ENCODE measurements at regions of chr9 and their contacts with region 1.

Region 1: GRCh38 chr9:20356403-20357035 is 265.8 kb downstream of the MLLT3 start:
- DNase-seq: peak; percentile 56
- H3K4me3 Mint-ChIP-seq: peak overlapping the region; percentile 49
- H3K27ac Mint-ChIP-seq: peak overlapping the region; percentile 81
- H3K4me1 Mint-ChIP-seq: peaks cover 23% of the 10 kb centered on the region
- H3K27me3 Mint-ChIP-seq: no peaks in the 10 kb centered on the region
- CTCF ChIP-seq: peak; percentile 24

Region 2: DNA sequence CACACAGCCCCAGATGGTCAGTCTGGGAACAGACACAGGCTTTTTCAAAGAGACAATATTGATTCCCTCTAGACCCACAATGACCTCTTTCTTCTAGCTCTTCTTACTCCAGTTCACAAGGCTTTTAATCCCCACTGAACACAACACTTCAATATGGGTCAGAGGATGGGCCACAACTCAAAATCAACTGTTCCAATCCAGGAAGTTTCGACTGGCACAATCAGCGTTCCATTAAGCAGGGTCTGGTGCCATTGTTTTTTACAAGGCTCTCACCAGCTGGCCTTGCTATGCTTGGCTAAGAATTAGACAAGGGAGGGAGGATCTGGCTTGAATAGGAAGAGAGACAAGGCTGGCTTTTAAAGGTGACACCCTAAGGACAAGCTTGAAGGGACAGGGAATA is 368.2 kb before region 1 on chr9:
- CTCF ChIA-PET with region 1: no interaction called
- intact Hi-C with region 1: no loop called
- DNase-seq: no peak
- H3K4me3 Mint-ChIP-seq: no peak overlapping the region
- H3K27ac Mint-ChIP-seq: no peak overlapping the region
- H3K4me1 Mint-ChIP-seq: no peaks in the 10 kb centered on the region
- H3K27me3 Mint-ChIP-seq: peaks cover 13% of the 10 kb centered on the region
- CTCF ChIP-seq: no peak

Region 3: DNA sequence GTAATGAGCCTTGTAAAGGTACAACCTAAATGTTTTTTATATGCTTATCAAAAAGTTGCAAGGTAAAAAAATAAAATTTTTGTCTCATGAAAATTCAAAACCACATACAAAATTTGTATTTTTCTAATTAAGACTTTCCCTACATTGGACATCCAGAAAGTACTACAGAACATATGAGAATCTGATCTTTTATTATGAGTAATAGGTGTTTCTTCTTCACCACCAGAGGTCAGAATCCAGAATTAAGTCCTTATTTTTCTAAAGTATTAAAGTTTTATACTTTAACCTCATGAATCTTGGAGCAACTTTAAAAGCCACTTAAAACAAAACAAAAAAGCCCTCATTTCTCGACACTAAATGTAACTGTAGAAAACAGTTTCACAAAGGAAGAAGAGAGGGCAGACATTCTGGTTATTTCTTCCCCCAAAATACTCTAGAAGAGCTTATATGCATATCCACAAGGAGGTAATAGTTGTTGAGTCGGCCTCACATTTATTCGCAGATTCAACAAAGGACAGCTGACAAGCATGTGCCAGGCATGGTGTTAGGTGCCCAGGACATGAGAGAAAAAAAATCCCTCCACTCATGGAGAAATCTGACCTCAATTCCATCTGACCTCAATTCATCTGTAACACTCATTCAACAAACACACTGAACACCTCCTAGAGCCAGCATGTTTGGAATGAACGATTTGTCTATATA is 196.5 kb after region 1 on chr9:
- CTCF ChIA-PET with region 1: interaction called, 4 read pairs
- intact Hi-C with region 1: loop called (anchors 5 kb)
- DNase-seq: no peak
- H3K4me3 Mint-ChIP-seq: peak overlapping the region; percentile 30
- H3K27ac Mint-ChIP-seq: peak overlapping the region; percentile 35
- H3K4me1 Mint-ChIP-seq: peaks cover 50% of the 10 kb centered on the region
- H3K27me3 Mint-ChIP-seq: no peaks in the 10 kb centered on the region
- CTCF ChIP-seq: no peak

Region 4: DNA sequence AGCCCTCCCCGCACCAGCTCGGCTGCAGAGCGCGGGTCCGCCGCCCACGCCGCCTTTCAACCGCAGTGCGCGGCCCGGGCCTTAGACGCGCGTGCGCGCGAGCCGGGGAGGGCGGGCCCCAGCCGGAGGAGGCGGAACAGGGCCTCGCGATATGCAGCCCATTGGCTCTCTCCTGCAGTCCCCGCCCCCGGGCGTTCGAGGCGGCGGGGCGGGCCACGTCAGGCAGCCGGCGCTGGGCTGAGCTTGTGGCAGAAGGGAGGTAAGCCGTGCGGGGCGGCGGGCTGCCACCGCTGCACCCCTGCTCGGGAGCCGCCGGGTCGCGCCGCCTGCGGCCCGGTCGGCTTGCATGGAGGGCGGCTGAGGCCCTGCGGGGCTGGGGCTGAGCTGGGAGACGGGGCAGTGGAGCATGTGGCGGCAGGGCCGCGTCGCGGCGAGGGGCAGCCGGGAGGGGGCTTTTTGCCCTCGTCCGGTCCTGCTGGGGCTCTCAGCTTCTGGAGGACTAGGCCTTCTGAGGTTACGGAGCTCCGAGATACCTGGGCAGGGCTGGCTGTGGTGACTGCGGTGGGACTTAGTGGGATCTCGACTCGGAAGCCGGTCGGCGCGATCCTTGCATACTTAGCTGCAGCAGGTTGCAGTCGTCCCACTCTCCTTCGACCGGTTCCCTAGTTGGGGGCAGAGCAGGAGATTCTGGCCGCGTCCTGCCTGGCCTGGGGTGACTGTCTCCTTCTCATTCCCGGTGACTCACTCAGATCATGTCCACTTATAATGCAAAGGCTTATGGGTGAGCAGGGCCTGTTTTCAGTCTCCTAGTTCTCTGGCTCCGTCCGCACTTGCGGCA is 327.7 kb after region 1 on chr9 and contains the start of gene FOCAD:
- CTCF ChIA-PET with region 1: no interaction called
- intact Hi-C with region 1: loop called (anchors 10 kb)
- DNase-seq: peak; percentile 94
- H3K4me3 Mint-ChIP-seq: peak within 1 kb of the TSS; percentile 80
- H3K27ac Mint-ChIP-seq: peak within 1 kb of the TSS; percentile 79
- H3K4me1 Mint-ChIP-seq: peaks cover 2% of the 10 kb centered on the region
- H3K27me3 Mint-ChIP-seq: no peaks in the 10 kb centered on the region
- CTCF ChIP-seq: no peak
- total RNA-seq, gene FOCAD: 22.5 and 23.8 TPM in 2 replicates

Region 5: DNA sequence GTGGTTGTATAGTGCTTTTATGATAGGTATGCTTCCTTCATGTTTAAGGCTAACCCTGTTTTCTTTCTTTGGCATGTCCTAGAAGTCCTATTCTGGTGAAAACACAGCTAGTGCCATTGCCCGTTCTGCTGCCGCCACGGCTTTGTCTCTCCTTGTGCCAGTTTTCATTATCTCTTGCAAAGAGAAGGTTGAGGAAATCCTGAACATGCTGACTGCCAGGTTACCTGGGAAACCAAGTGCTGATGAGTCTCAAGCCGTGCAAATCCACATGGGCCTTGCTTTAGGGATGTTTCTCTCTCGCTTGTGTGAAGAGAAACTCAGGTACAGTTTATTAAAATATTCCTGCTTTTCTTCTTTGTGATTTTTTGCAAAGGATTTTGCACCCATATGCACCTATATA is 572.8 kb after region 1 on chr9:
- CTCF ChIA-PET with region 1: interaction called, 6 read pairs
- intact Hi-C with region 1: loop called (anchors 10 kb)
- DNase-seq: no peak
- H3K4me3 Mint-ChIP-seq: no peak overlapping the region
- H3K27ac Mint-ChIP-seq: no peak overlapping the region
- H3K4me1 Mint-ChIP-seq: no peaks in the 10 kb centered on the region
- H3K27me3 Mint-ChIP-seq: no peaks in the 10 kb centered on the region
- CTCF ChIP-seq: no peak

Region 6: DNA sequence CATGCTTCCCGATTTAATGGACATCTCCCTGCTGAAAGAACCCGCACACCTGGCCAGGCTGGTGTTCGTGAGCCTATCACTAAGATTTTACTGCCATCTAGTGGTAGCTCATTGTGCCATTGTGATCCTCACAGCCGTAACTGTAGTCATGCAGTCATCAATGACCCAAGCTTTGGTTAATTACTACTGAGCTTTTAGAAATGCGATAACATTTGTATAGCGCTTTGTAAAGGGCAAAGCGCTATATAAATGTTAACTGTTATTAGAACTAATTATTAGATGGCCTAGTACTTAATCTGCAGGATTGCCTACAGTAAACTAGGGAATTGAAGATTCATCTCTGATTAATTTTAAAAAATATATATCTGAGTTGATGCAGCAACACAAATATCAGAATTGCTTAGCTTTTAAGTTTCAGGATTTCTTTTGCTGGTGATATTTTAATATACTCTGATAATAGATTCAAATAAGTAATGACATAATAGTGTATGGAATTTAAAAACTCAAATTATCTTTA is 584.7 kb after region 1 on chr9:
- CTCF ChIA-PET with region 1: interaction called, 3 read pairs
- intact Hi-C with region 1: loop called (anchors 1 kb)
- DNase-seq: peak; percentile 39
- H3K4me3 Mint-ChIP-seq: no peak overlapping the region
- H3K27ac Mint-ChIP-seq: no peak overlapping the region
- H3K4me1 Mint-ChIP-seq: no peaks in the 10 kb centered on the region
- H3K27me3 Mint-ChIP-seq: no peaks in the 10 kb centered on the region
- CTCF ChIP-seq: peak; percentile 47

Measured in Calu3 (cell line).